Transverse colon (tissue), 4 donors: ENCODE measurements at regions of chr6 and their contacts with region 1.

Region 1: DNA sequence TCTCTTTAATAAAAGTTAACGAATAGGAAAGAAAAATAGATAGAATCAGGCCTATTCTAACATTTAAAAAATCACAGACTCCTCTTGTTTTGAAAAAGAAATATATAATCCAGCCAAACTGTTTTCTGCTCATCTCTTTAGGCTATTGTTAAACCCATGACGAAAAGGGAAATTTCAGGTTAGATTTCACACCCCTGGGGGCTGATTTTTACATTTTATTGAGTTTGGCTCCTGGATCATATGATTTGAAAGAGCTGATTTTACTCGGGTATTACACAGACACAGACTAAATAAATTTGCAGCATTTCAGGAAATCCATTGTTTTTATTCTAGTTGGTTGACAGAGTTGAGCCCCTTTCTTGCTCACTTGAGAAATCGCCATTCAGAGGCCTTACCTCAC is 135.8 kb upstream of the HMGCLL1 start:
- DNase-seq: no peak
- H3K4me3 ChIP-seq: no peak overlapping the region
- H3K27ac ChIP-seq: no peak overlapping the region
- H3K4me1 ChIP-seq: no peaks in the 10 kb centered on the region
- H3K27me3 ChIP-seq: no peaks in the 10 kb centered on the region
- CTCF ChIP-seq: no peak
- EP300 ChIP-seq: no peak
- POLR2A ChIP-seq: no peak

Region 2: DNA sequence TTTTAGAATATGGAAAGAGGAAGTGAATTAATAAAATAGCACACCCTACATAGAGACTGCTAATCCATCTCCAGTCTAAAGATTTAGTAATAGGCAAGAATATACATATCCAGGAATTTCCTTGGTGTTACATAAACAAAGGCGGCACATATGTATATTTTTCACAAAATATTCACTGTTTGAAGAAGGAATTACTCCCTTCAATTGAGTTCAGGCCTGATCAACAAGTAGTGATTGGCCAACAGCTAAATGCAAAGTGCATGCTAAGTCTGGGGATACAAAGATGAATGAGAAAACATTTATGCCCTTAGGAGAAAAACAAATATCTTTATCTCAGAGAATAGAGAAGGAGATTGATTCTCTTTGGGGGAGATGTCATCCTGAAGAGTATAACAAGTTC is 547.0 kb before region 1 on chr6:
- in situ Hi-C with region 1: no loop called
- intact Hi-C with region 1: no loop called
- DNase-seq: no peak
- H3K4me3 ChIP-seq: no peak overlapping the region
- H3K27ac ChIP-seq: no peak overlapping the region
- H3K4me1 ChIP-seq: no peaks in the 10 kb centered on the region
- H3K27me3 ChIP-seq: no peaks in the 10 kb centered on the region
- CTCF ChIP-seq: no peak
- EP300 ChIP-seq: no peak
- POLR2A ChIP-seq: no peak

Region 3: DNA sequence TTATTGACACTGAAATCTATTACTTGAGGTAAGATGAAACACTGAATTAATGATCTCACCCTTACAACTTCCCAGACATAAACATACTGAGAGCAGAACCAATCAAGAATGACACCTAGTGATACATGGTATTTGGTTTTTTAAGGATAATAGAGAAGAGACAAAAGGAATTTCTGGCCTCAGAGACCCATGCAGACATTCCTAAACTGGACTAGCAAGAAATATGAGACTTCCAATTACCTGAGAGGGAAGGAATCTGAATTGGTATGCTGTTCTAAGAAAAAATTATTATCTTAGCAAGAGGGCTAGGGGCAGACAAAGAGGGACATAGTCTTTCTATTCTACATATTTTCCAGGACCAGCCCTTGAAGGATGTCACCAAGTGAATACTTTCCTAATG is 19.4 kb after region 1 on chr6:
- in situ Hi-C with region 1: no loop called
- intact Hi-C with region 1: loop called (anchors 1 kb)
- DNase-seq: no peak
- H3K4me3 ChIP-seq: no peak overlapping the region
- H3K27ac ChIP-seq: no peak overlapping the region
- H3K4me1 ChIP-seq: no peaks in the 10 kb centered on the region
- H3K27me3 ChIP-seq: no peaks in the 10 kb centered on the region
- CTCF ChIP-seq: no peak
- EP300 ChIP-seq: no peak
- POLR2A ChIP-seq: no peak

Region 4: DNA sequence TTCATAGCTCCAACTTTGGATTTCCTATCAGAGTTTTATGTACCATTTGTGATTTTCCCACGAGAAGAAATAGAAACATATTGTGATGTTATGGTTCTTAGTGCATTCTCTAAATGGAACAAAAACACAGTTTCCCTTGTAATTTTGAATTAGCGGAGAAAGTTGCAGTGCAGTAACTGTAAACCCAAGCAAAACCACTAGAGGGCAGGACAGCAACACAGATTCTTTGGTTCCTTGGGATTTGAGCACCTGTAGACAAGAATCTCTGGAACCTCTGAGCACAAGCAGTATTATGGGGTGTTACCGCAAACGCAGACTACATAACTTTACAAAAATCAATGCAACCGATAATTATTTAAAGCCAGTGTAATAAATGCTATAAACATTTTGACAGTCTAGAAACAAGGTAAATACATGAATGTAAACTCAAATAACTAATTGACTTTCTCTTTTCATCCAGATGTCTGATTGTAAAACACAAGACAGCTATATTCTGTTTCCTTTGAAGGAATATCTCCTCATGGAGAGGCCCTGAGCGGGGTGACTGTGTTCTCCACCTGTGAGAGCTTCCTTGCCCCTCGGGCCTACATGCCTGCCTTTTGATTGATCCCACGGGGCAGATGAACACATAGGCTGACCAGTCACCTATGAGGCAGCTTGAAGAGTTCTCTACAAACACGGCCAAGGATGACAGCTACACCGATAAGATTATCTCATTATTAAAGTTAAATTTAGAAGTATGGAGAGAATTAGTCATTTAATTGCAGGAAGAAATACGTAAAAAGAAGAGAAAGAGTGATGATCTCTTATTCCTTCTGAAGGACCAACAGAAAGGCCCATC is 600.1 kb after region 1 on chr6:
- in situ Hi-C with region 1: no loop called
- intact Hi-C with region 1: no loop called
- DNase-seq: no peak
- H3K4me3 ChIP-seq: no peak overlapping the region
- H3K27ac ChIP-seq: no peak overlapping the region
- H3K4me1 ChIP-seq: peaks cover 0 to 9% (median 0%) of the 10 kb centered on the region in 4 donors
- H3K27me3 ChIP-seq: no peaks in the 10 kb centered on the region
- CTCF ChIP-seq: peak; percentile 38 to 68 (median 64)
- EP300 ChIP-seq: no peak
- POLR2A ChIP-seq: no peak